T-cell (primary cell): ENCODE measurements at regions of chr7 and their contacts with region 1.

Region 1: DNA sequence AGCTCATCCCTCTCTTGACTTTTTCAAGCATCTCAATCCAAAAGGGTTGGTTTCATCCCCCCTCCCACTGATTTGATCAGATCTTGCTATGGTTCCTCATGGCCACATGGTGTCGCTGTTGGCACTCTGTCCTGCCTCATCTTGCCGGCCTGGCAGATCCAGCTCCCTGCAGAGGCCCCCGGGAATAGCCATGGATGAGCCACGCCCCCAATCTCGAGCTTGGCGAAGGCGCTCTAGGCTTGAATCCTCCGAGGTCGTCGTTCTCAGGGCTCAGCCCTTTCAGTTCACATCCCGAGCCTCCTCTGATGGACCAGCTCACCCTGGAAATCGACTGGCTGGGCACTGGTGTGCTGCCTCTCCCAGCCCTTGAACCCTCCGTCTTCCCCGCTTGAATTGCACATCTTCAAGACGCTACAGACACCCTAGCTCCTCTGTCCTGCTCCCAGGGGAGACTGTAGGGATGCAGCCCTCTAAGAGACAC is 628.7 kb downstream of the TYW1 start:
- DNase-seq: peak in 4 of 35 experiments; percentile 2 to 36 (median 6)
- ATAC-seq: no peak
- H3K4me3 ChIP-seq: peak overlapping the region in 1 of 2 donors; percentile 1
- H3K4me3 Mint-ChIP-seq: no peak overlapping the region
- H3K27ac ChIP-seq: no peak overlapping the region
- H3K27ac Mint-ChIP-seq: no peak overlapping the region
- H3K4me1 ChIP-seq: peaks cover 0 to 4% of the 10 kb centered on the region in 2 experiments
- H3K4me1 Mint-ChIP-seq: peaks cover 0 to 7% (median 4%) of the 10 kb centered on the region in 3 donors
- H3K27me3 ChIP-seq: peaks cover 0 to 6% of the 10 kb centered on the region in 2 experiments
- H3K27me3 Mint-ChIP-seq: peaks cover 2 to 17% of the 10 kb centered on the region in 2 donors

Region 2: DNA sequence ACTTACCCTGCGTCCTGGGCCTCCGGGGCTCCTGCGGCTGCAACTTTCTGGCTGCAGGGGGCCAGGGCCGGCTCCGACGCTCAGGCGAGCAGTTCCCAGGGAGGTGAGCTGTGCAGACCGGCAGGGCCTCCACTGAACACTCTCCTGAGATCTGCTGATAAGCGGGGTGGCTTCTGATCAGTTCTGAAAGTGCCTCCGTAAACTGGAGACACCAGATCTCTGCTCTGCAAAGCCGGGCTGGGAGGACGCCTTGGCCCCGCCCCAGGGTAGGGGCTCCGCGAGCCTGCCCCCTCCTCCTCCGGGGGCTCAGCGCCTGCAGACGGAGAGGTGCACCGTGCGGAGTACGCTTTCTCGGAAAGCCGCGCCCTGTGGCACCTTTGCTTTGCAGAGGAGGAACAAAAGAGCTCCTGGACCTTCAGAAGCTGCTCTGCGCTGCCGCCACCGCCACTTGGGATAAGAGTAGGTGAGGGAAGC is 1893.7 kb before region 1 on chr7:
- CTCF ChIA-PET with region 1: no interaction called
- POLR2A ChIA-PET with region 1: no interaction called
- DNase-seq: peak in 14 of 35 experiments; percentile 1 to 25 (median 4)
- ATAC-seq: peak; percentile 59 to 79 (median 66)
- H3K4me3 ChIP-seq: peak overlapping the region in 1 of 2 donors; percentile 62
- H3K4me3 Mint-ChIP-seq: peak overlapping the region; percentile 18 to 64 (median 64)
- H3K27ac ChIP-seq: no peak overlapping the region
- H3K27ac Mint-ChIP-seq: no peak overlapping the region
- H3K4me1 ChIP-seq: peaks cover 0 to 9% of the 10 kb centered on the region in 2 experiments
- H3K4me1 Mint-ChIP-seq: peaks cover 3 to 10% (median 5%) of the 10 kb centered on the region in 3 donors
- H3K27me3 ChIP-seq: no peaks in the 10 kb centered on the region
- H3K27me3 Mint-ChIP-seq: no peaks in the 10 kb centered on the region

Region 3: DNA sequence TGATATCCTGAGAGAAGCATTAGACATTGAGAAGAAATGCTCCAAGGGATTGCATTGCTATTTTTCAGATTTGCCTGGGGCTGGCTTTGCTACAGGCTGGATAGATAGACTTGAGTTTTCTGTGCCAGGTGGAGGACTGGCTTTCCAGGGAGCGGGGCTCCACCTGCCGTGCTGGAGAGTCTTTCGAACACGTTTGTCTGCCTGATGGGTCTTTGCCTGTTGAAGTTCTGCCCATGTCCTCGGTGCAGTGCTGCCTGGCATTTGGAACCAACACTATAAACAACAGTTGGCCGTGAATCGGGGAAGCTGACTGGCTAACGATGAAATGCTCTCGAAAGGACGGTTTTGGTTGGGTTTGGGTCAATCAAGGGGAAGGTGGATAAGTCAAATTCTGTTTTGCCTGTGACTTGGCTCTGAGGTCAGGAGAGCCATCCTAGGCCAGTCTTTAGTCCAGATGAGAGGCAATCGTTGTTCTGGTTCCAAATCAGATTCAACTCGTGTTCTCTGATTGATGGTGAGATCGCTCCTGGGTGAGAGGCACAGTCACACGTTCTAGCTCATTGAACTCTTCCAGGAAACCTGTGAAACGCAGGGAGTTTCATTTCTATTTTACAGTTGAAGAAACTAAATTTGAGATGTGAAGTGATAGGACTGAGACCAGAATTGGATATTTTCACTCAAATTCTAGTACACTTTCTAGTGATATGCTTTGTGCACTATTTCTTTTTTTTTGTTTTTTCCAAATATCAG is 29.7 kb before region 1 on chr7:
- CTCF ChIA-PET with region 1: interaction called in 1 of 2 experiments, 10 read pairs
- POLR2A ChIA-PET with region 1: no interaction called
- DNase-seq: no peak
- ATAC-seq: no peak
- H3K4me3 ChIP-seq: no peak overlapping the region
- H3K4me3 Mint-ChIP-seq: no peak overlapping the region
- H3K27ac ChIP-seq: no peak overlapping the region
- H3K27ac Mint-ChIP-seq: no peak overlapping the region
- H3K4me1 ChIP-seq: no peaks in the 10 kb centered on the region
- H3K4me1 Mint-ChIP-seq: no peaks in the 10 kb centered on the region
- H3K27me3 ChIP-seq: no peaks in the 10 kb centered on the region
- H3K27me3 Mint-ChIP-seq: no peaks in the 10 kb centered on the region

Region 4: GRCh38 chr7:67705850-67706249 is 80.6 kb after region 1 on chr7:
- CTCF ChIA-PET with region 1: interaction called in 1 of 2 experiments, 13 read pairs
- POLR2A ChIA-PET with region 1: no interaction called
- DNase-seq: no peak
- ATAC-seq: no peak
- H3K4me3 ChIP-seq: no peak overlapping the region
- H3K4me3 Mint-ChIP-seq: no peak overlapping the region
- H3K27ac ChIP-seq: no peak overlapping the region
- H3K27ac Mint-ChIP-seq: no peak overlapping the region
- H3K4me1 ChIP-seq: no peaks in the 10 kb centered on the region
- H3K4me1 Mint-ChIP-seq: no peaks in the 10 kb centered on the region
- H3K27me3 ChIP-seq: no peaks in the 10 kb centered on the region
- H3K27me3 Mint-ChIP-seq: no peaks in the 10 kb centered on the region

Region 5: GRCh38 chr7:67771846-67772605 is 146.7 kb after region 1 on chr7:
- CTCF ChIA-PET with region 1: no interaction called
- POLR2A ChIA-PET with region 1: no interaction called
- DNase-seq: no peak
- ATAC-seq: no peak
- H3K4me3 ChIP-seq: no peak overlapping the region
- H3K4me3 Mint-ChIP-seq: no peak overlapping the region
- H3K27ac ChIP-seq: no peak overlapping the region
- H3K27ac Mint-ChIP-seq: no peak overlapping the region
- H3K4me1 ChIP-seq: no peaks in the 10 kb centered on the region
- H3K4me1 Mint-ChIP-seq: no peaks in the 10 kb centered on the region
- H3K27me3 ChIP-seq: no peaks in the 10 kb centered on the region
- H3K27me3 Mint-ChIP-seq: no peaks in the 10 kb centered on the region